ENCODE measurements at regions of chr16 and their contacts with region 1.

Region 1: DNA sequence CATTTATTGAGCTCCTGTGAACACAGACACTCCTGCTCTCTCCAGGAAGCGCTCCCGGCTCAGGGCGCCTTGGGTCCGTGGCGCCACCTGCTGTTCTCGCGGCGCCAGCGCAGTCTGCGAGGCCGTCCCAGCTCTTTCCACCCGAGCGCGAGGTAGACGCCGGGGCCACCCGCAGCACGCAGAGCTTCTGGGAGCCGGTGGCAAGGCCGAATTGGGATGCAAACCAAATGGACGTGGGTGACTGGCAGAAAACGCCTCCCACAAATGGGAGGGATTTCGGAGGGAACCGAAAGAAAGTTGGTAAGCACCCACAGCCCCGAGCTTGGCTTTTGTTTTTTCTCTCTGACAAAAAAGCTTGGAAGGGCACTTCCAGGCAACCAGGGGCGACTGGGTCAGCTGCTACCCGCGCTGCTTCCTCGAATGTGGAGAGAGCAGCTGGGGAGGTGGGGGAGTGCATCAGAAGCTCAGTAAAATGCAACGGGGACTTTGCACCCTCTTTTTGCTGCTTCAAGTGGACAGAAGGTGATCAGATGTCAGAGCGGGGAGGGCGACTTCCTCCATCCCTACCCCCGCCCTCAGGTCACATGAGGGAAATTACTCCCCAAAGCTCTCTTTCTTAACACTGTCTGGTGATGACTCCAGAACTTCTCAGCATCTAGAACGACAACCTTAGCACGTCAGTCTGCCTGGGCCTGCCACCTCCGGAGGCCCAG is 13.5 kb upstream of the N4BP1 start:
- DNase-seq: peak; percentile 93
- ATAC-seq: peak; percentile 97

Region 2: DNA sequence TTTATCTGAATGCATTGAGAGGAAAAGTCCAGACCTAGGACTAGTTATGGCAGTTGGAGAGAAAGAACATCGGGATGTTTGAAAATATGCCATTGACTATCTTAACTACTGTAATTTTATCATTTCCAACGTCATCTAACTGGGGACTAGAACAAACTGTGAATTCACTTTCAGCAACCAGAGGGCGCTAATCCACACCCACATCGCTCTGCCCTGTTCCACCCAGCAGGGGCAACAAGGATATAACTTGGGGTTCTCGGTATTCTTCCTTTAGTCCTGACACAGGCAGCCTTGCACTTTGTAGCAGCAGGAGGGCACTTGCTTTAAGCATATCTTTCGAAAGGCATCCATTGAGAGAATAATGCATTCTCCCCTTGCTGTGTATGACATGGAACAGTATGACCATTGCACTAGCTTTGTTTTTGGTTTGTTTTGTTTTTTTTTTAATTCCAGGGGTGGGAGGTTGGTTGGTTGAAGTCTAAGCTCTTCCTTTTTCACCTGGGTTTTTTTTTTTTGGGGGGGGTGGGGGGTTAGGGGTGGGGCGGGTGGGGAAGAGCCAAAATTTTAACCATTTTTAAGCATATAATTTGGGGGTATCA is 269.8 kb before region 1 on chr16:
- intact Hi-C with region 1: loop called (anchors 2 kb)
- DNase-seq: no peak
- ATAC-seq: peak; percentile 72

Region 3: GRCh38 chr16:48385272-48386150 is 237.9 kb before region 1 on chr16 and contains the start of gene SIAH1:
- intact Hi-C with region 1: loop called (anchors 2 kb)
- DNase-seq: peak; percentile 94
- ATAC-seq: peak; percentile 93
- total RNA-seq, gene SIAH1: 16.1 TPM

Measured in Right ventricle myocardium inferior (tissue), 1 donor.